ENCODE measurements at regions of chr3 and their contacts with region 1.

Region 1: GRCh38 chr3:45043728-45044299 is 17.7 kb downstream of the CLEC3B start:
- DNase-seq: no peak
- ATAC-seq: no peak
- H3K4me3 ChIP-seq: no peak overlapping the region
- H3K27ac ChIP-seq: no peak overlapping the region
- H3K4me1 ChIP-seq: no peaks in the 10 kb centered on the region
- H3K27me3 ChIP-seq: no peaks in the 10 kb centered on the region
- CTCF ChIP-seq: no peak

Region 2: DNA sequence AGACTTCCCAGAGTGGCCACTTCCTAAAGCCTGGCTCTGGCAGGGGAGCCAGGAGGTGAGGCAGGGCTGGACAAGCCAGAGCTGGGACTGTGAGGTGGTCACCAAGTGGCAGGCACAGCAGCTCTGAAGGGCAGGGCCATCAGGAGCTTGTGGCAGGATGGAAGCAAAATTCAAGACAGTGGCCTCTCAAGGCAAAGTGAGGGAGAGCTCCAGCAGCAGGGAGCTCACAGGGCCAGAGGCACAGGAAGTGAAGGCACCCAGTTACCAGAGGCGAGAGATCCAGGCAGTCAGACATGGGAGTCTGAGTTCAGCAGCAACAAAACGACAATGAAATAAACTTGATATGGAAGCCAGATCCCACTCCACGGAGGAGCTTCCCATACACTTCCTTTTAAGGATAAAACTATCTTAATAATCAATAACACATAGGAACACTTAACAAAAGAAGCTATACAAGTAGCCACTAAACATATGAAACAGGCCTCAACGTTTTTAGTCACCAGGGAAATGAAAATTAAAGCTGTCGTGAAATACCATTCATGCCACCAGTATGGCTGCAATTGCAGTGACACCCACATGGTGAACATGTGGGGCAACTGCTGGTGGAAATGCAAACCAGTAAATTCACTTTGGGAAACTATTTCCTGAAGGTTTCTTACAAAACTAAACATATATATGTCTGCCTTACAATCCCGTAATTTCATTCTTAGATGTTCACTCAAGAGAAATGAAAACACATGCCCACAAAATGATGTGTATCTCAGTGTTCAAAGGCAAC is 217.7 kb after region 1 on chr3:
- CTCF ChIA-PET with region 1: no interaction called
- POLR2A ChIA-PET with region 1: no interaction called
- in situ Hi-C with region 1: no loop called
- intact Hi-C with region 1: no loop called
- DNase-seq: no peak
- ATAC-seq: no peak
- H3K4me3 ChIP-seq: no peak overlapping the region
- H3K27ac ChIP-seq: no peak overlapping the region
- H3K4me1 ChIP-seq: no peaks in the 10 kb centered on the region
- H3K27me3 ChIP-seq: no peaks in the 10 kb centered on the region
- CTCF ChIP-seq: no peak

Region 3: DNA sequence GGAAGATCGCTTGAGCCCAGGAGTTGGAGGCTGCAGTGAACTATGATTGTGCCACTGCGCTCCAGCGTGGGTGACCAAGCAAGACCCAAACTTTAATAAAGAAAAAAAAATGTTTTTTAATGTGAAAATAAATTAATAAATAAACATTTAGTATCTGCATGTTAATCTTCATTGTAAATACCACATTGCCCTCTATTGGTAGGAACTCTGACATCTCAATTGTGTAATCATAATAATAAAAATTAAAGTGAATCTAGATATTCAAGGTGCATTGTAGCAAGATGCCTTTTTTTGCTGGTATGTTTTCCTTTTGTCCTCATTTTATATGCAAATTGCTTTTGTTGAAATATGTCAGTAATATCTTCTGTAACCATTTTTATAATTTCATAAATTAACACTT is 455.7 kb after region 1 on chr3:
- CTCF ChIA-PET with region 1: interaction called, 3 read pairs
- POLR2A ChIA-PET with region 1: no interaction called
- in situ Hi-C with region 1: no loop called
- intact Hi-C with region 1: loop called (anchors 5 kb)
- DNase-seq: no peak
- ATAC-seq: no peak
- H3K4me3 ChIP-seq: no peak overlapping the region
- H3K27ac ChIP-seq: no peak overlapping the region
- H3K4me1 ChIP-seq: no peaks in the 10 kb centered on the region
- H3K27me3 ChIP-seq: no peaks in the 10 kb centered on the region
- CTCF ChIP-seq: peak; percentile 42; the same call in 1 of the 2 replicates

Region 4: DNA sequence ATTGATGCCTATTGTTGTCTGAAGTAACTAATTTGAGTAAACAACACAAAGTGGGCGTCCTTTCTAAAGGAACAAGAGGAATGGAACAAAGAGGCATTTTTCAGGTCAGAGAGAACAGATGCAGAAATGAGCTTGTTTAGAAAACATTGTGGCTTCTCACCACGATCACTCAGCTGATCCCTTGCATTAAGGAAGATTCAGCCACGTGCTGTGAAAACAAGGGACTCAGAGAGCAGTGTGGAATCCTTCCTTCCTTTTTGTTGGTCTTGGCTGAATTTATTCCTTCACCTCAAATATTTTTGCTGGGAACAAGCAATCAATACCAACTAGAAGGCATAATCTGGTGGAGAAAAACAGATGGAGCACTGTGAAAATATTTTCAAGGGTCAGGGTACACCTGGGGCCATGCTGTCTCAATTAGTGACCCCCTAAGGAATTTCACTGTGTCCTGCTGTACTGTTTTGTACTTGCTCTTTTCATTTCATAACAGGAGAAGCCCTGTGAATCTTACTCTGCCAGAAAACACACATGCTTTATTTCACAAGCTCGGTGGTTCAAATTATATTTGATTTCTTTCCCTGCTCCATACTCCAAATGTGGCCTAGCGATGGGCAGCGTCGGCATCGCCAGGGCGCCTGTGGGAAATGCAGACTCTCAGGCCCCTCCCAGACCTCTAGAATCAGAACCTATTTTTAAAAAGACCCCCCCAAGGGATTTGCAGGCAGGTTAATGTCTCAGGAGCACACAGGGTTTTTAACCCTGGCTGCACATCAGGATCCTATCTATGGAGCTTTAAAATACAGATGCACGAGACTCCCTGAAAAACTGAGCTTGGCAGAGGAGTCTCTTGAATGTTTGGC is 764.1 kb after region 1 on chr3:
- CTCF ChIA-PET with region 1: no interaction called
- POLR2A ChIA-PET with region 1: interaction called, 12 read pairs
- in situ Hi-C with region 1: no loop called
- intact Hi-C with region 1: no loop called
- DNase-seq: no peak
- ATAC-seq: no peak
- H3K4me3 ChIP-seq: no peak overlapping the region
- H3K27ac ChIP-seq: no peak overlapping the region
- H3K4me1 ChIP-seq: no peaks in the 10 kb centered on the region
- H3K27me3 ChIP-seq: no peaks in the 10 kb centered on the region
- CTCF ChIP-seq: no peak